ENCODE measurements at regions of chr4 and their contacts with region 1.

Region 1: GRCh38 chr4:137361756-137362470 is 170.4 kb downstream of the PCDH18 start:
- DNase-seq: peak; percentile 32
- ATAC-seq: peak; percentile 33
- H3K4me3 ChIP-seq: no peak overlapping the region
- H3K27ac ChIP-seq: peak overlapping the region; percentile 70; the same call in 1 of the 2 replicates
- H3K4me1 ChIP-seq: peaks cover 12% of the 10 kb centered on the region
- H3K27me3 ChIP-seq: no peaks in the 10 kb centered on the region
- CTCF ChIP-seq: no peak
- POLR2A ChIP-seq: no peak
- RAD21 ChIP-seq: no peak

Region 2: GRCh38 chr4:137343221-137343620 is 18.7 kb before region 1 on chr4:
- CTCF ChIA-PET with region 1: no interaction called
- POLR2A ChIA-PET with region 1: no interaction called
- dilution Hi-C with region 1: no loop called
- in situ Hi-C with region 1: no loop called
- intact Hi-C with region 1: loop called (anchors 1 kb)
- DNase-seq: peak; percentile 66
- ATAC-seq: peak; percentile 44; the same call in 1 of the 2 replicates
- H3K4me3 ChIP-seq: no peak overlapping the region
- H3K27ac ChIP-seq: peak overlapping the region; percentile 37; the same call in 1 of the 2 replicates
- H3K4me1 ChIP-seq: 0 out of 2 replicates have a peak, but pooled peaks cover 2% of the 10 kb centered on the region
- H3K27me3 ChIP-seq: no peaks in the 10 kb centered on the region
- CTCF ChIP-seq: no peak
- POLR2A ChIP-seq: no peak
- RAD21 ChIP-seq: no peak

Measured in IMR-90 (cell line).